ENCODE measurements at regions of chr15 and their contacts with region 1.

Region 1: DNA sequence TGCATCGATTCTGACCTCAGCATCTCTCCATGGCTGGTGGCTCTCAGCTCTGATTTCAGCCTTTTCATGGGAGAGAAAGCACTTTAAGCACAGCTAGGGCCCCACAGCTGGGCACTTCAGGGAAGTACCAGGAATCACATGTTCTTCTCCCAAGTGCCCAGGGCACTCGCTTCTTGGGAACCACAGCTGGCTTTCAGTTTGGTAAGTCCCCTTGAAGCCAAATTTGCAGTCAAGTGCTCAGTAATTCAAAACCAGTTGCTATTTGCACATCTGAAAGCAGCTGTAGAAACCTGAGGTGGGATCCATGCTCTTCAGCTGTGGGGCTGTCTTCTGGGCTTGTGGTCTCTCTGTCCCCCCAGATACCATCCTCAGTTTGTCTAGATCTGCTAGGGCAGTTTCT is 12.8 kb downstream of the GABRA5 start:
- DNase-seq: no peak
- H3K4me3 ChIP-seq: no peak overlapping the region
- H3K27ac ChIP-seq: no peak overlapping the region
- H3K4me1 ChIP-seq: no peaks in the 10 kb centered on the region
- H3K27me3 ChIP-seq: no peaks in the 10 kb centered on the region
- CTCF ChIP-seq: no peak
- EP300 ChIP-seq: no peak
- RAD21 ChIP-seq: no peak

Region 2: DNA sequence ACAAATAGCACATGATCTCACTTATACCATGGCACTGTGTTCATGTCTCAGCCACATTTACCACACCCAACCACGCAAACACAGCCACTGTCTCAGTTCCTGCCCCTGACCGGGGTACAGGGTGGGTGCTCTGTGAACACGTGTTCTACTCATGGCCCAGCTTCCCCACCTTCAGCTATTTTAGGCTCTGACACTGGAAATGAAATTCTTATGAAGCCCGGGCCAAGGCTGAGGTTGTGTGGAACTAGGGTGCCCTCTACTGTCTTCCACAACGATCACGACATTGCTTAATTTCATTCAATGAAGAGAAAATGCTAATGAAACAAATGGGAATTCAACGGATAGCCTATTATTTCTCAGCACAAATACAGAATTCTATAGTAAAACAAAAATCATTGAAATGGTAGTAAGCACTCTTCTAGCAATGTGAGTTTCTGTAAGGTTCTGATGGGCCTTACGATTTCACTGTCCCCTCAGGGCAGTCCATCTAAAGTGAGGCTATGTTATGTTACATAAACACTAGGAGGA is 15.0 kb before region 1 on chr15:
- CTCF ChIA-PET with region 1: interaction called, 13 read pairs
- POLR2A ChIA-PET with region 1: no interaction called
- DNase-seq: peak; percentile 77
- H3K4me3 ChIP-seq: no peak overlapping the region; a peak in 1 of 4 replicates
- H3K27ac ChIP-seq: no peak overlapping the region
- H3K4me1 ChIP-seq: no peaks in the 10 kb centered on the region; a peak in 1 of 4 replicates
- H3K27me3 ChIP-seq: no peaks in the 10 kb centered on the region
- CTCF ChIP-seq: peak; percentile 60
- EP300 ChIP-seq: no peak
- RAD21 ChIP-seq: peak; percentile 92

Measured in SK-N-SH (cell line).